ENCODE measurements at regions of chr2 and their contacts with region 1.

Region 1: DNA sequence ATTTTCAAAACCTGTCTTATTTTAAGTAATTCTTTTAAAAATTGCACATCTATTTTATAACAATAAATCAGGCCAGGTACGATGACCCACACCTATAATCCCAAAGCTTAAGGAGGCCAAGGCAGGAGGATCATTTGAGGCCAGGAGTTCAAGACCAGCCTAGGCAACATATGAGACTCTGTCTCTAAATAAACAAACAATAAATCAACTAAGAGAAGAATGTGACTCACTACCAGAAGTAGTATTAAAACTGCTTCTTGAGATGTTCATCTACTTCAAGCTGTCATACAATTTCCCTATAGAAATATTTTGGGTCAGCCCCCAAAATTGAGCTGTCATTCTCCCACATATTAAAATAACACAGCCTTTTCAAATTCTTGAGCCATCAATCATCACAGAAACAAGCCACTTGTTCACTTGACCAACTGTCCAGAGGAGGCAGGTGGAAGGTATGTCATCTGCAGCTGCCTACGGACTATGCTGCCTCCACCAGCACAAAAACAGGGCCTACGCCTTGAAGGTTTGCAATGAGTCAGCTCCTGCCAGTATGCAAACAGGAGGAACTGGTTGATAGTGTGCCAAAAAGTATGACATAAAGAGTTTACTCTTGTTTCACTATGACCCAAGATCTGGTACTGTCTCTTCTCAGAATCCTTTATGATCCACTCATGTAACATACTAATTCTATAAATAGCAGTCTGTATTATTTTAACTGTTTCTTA is 33.6 kb downstream of the KIDINS220 start:
- DNase-seq: peak; percentile 55
- H3K4me3 ChIP-seq: no peak overlapping the region
- H3K27ac ChIP-seq: peak overlapping the region; percentile 9 to 48 (median 41)
- H3K4me1 ChIP-seq: peaks cover 0 to 17% (median 6%) of the 10 kb centered on the region in 4 donors
- H3K27me3 ChIP-seq: no peaks in the 10 kb centered on the region
- CTCF ChIP-seq: peak in 2 of 5 experiments; percentile 9 to 33
- EP300 ChIP-seq: no peak
- POLR2A ChIP-seq: no peak

Region 2: GRCh38 chr2:8767324-8767723 is 36.5 kb before region 1 on chr2:
- in situ Hi-C with region 1: no loop called
- intact Hi-C with region 1: loop called (anchors 1 kb)
- DNase-seq: no peak
- H3K4me3 ChIP-seq: no peak overlapping the region
- H3K27ac ChIP-seq: no peak overlapping the region
- H3K4me1 ChIP-seq: no peaks in the 10 kb centered on the region
- H3K27me3 ChIP-seq: no peaks in the 10 kb centered on the region
- CTCF ChIP-seq: no peak
- EP300 ChIP-seq: no peak
- POLR2A ChIP-seq: no peak

Measured in transverse colon (tissue), 4 donors.